ENCODE measurements at regions of chr2 and their contacts with region 1.

Region 1: DNA sequence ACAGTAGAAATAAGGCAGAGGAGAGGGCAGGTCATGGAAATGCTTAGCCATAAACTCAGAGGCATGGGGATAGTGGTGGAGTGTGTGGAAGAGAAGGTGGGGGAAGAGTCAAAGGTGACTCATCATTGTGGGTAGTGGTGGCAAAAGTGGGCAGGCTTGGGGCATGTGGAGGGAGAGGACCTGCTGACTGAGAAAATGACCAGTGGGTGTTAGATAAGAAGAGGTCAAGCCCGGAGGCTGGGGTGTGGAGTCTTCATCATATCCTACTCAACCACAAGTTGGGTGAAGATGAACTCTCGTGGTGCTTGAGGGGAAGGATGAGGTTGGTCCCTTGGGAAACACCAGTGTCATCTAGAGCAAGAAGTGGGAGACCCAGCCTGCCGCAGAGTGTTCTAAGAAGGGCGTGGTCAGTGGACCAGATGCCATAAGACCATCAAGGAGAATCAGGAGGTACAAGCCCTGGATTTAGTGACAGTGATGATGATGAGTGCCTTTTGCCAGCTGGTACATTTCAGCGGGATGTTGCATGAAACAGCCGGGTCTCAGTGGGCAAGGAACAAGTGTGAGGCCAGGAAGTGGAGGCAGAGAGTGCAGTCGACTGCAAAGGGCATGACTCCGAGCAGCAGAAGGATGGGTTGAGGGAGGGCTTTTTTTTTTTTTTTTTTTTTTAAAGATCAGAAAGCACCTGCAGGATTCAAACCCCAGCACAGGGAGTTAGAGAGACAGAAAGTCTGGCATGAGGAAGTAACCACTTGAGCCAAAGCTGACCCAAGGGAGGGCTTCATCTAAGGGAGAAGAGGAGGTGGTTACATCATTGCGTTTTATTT is 122.6 kb upstream of the SPRED2 start:
- DNase-seq: no peak
- ATAC-seq: no peak

Region 2: DNA sequence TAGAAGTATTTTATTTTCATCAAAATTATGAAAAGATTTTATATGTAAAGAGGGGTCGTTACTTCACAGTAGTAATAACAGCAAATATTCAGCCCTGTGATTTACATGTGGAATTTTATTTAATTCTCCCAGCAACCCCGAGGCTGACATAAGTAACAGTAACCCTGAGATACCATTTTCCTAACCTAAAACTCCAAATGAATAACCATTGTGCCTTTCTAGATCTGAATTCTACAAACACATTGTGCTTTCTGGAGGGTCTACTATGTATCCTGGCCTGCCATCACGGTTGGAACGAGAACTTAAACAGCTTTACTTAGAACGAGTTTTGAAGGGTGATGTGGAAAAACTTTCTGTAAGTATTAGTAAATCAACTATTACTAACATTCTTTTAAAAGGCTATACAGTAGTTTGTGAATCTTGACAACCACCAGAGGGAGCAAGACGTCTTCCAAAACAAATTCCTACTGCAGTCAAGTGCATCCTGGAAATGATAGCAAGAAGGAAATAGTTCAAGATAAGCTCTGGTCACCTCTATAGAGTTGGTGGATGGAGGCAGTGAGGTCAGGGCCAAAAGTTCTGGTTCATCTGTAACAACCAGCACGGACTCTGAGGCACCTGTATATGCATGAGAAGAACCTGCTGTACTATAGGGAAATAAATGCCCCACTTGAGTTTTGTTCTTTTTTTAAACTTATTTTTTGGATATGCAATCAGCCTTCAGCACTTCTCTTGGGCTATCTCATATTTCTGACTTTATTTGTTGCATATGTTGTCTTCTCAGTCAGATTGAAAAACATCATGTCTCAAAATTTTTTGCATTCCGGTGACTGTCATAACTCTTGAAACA is 289.9 kb before region 1 on chr2:
- intact Hi-C with region 1: loop called (anchors 5 kb)
- DNase-seq: no peak
- ATAC-seq: peak; percentile 88

Region 3: DNA sequence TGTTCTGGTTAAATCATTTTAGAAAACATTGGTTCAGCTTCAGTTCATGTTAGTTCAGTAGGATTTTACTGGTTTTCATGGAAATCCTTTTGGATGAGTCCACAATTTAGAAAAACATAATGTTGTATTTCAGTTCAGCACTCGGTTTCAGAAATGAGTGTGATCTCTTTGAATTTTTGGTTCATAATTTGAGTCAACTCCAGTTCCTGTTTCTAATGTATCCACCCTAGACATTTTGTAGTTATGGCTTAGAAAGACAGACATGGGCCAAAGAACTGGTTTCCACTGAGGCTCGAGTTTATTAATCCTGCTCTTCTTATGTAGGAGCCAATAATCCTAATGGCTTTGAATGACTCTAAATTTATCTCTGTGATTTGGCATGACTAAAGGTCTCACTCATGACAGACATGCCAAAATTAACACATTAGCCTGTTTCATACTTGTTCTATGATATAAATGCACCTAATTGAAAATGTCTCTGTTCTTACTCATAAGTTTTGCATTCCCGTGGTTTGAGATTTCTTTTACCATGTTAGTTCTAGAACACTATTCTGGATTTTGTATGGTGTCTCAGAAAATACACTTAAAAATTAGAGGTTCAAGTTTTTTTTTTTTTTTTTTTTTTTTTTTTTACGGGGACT is 40.3 kb before region 1 on chr2:
- intact Hi-C with region 1: no loop called
- DNase-seq: no peak
- ATAC-seq: no peak

Region 4: GRCh38 chr2:65605743-65606058 is 50.7 kb after region 1 on chr2:
- intact Hi-C with region 1: no loop called
- DNase-seq: no peak
- ATAC-seq: no peak